CD4-positive, alpha-beta memory T cell (primary cell): ENCODE measurements at regions of chr12 and their contacts with region 1.

Region 1: GRCh38 chr12:103930034-103930786 is at the start of gene HSP90B1:
- DNase-seq: peak; percentile 99 to 100 (median 100)
- H3K4me3 ChIP-seq: peak within 1 kb of the TSS; percentile 87
- H3K4me3 Mint-ChIP-seq: peak within 1 kb of the TSS; percentile 87 to 96 (median 91)
- H3K27ac ChIP-seq: peak within 1 kb of the TSS; percentile 99
- H3K27ac Mint-ChIP-seq: peak within 1 kb of the TSS; percentile 99 to 100 (median 100)
- H3K4me1 ChIP-seq: peaks cover 61% of the 10 kb centered on the region
- H3K4me1 Mint-ChIP-seq: peaks cover 42 to 83% (median 54%) of the 10 kb centered on the region in 4 donors
- H3K27me3 ChIP-seq: no peaks in the 10 kb centered on the region
- H3K27me3 Mint-ChIP-seq: peaks cover 0 to 3% of the 10 kb centered on the region in 2 donors
- total RNA-seq, gene HSP90B1: 515 to 534 TPM

Region 2: DNA sequence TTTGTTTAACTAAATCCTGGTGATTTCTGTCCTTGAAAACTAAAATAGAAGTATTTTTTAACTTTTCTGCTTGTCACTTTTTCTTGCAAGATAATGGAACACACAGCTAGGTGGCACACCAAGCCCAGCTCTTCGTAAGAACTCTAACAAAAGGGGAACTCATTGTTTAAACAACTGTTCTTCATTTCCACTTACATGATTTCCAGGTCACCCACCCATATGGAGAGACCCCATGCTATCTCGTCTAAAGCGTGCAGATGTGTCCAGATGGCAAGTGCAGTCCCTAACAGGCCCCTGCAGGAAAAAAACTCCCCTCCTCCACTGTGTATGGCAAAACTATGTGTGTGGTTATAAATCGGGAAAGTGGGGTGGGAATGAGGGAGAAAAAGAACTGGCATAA is 45.9 kb before region 1 on chr12:
- CTCF ChIA-PET with region 1: interaction called, 5 read pairs
- POLR2A ChIA-PET with region 1: interaction called, 11 read pairs
- intact Hi-C with region 1: loop called (anchors 1 kb)
- DNase-seq: peak; percentile 33 to 52 (median 41)
- H3K4me3 ChIP-seq: no peak overlapping the region
- H3K4me3 Mint-ChIP-seq: peak overlapping the region in 1 of 8 donors; percentile 4
- H3K27ac ChIP-seq: no peak overlapping the region
- H3K27ac Mint-ChIP-seq: peak overlapping the region in 5 of 7 donors; percentile 12 to 44 (median 26)
- H3K4me1 ChIP-seq: peaks cover 4% of the 10 kb centered on the region
- H3K4me1 Mint-ChIP-seq: peaks cover 6 to 24% (median 12%) of the 10 kb centered on the region in 4 donors
- H3K27me3 ChIP-seq: no peaks in the 10 kb centered on the region
- H3K27me3 Mint-ChIP-seq: no peaks in the 10 kb centered on the region

Region 3: GRCh38 chr12:103947871-103948555 is 17.8 kb after region 1 on chr12:
- CTCF ChIA-PET with region 1: no interaction called
- POLR2A ChIA-PET with region 1: interaction called, 93 read pairs
- intact Hi-C with region 1: no loop called
- DNase-seq: no peak
- H3K4me3 ChIP-seq: no peak overlapping the region
- H3K4me3 Mint-ChIP-seq: no peak overlapping the region
- H3K27ac ChIP-seq: no peak overlapping the region
- H3K27ac Mint-ChIP-seq: peak overlapping the region in 5 of 7 donors; percentile 42 to 78 (median 53)
- H3K4me1 ChIP-seq: no peaks in the 10 kb centered on the region
- H3K4me1 Mint-ChIP-seq: peaks cover 8 to 20% (median 13%) of the 10 kb centered on the region in 4 donors
- H3K27me3 ChIP-seq: no peaks in the 10 kb centered on the region
- H3K27me3 Mint-ChIP-seq: no peaks in the 10 kb centered on the region

Region 4: DNA sequence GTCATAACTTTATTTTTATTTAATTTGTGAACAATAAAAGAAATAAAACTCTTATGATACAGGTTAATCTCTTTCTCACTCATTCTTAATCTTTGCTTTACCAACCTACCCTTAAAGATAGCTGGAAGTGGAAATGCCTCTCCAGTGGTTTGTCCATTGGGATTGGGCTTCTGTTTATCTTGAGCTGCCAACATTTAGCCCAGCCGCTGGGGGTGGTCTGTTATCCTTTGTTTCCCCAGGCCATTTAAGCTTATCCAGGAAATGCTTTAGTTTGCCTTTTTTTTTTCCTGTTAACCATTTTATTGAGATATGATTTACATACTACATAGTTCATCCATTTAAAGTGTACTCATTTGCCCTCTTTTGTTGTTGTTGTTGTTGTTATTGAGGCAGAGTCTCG is 43.7 kb after region 1 on chr12:
- CTCF ChIA-PET with region 1: no interaction called
- POLR2A ChIA-PET with region 1: interaction called, 10 read pairs
- intact Hi-C with region 1: no loop called
- DNase-seq: no peak
- H3K4me3 ChIP-seq: no peak overlapping the region
- H3K4me3 Mint-ChIP-seq: peak overlapping the region in 1 of 8 donors; percentile 8
- H3K27ac ChIP-seq: no peak overlapping the region
- H3K27ac Mint-ChIP-seq: peak overlapping the region in 1 of 7 donors; percentile 60
- H3K4me1 ChIP-seq: peaks cover 26% of the 10 kb centered on the region
- H3K4me1 Mint-ChIP-seq: peaks cover 28 to 79% (median 43%) of the 10 kb centered on the region in 4 donors
- H3K27me3 ChIP-seq: no peaks in the 10 kb centered on the region
- H3K27me3 Mint-ChIP-seq: no peaks in the 10 kb centered on the region

Region 5: DNA sequence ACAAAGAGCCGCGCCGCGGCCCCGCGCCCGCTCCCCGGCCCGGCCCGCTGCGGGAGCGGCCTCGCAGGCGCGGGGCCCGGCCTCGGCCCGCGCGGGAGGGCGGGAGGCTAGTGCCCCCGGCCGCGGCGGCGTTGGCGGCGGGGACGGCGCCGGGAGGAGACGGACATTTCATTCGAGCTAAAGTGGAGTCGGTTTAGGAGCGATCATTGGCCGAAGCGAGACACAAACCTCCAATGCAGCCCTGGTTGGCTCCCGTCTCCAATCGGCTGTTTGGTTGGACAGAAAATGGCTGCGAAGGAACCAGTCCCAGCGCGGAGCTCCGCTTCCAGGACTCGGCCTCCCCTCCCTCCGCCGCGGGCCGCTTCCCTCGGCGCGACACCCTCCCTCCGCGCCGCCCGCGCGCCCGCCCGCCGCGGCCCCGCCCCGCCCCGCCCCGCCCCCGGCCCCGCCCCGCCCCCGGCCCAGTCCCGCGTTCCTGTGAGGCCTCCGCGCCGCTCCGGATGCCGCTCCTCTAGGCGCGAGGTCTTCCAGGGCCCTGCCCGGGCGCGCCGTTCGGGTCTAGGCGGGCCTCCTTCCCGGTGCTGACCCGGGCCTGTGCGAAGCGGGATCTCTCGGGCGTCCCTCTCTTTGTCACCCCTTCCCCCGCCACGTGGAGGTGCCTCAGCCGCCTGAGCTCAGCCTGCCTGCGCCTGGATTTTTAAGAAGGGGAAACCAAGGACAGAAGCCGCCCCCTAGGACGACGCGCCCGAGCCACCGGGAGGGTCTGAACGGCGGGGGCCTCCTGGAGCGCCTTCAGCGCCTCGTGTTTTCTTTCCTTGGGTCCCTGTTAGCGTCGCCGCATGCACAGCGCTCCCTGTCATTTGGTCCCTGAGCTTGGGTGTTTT is 207.9 kb after region 1 on chr12 and contains the start of gene NFYB:
- CTCF ChIA-PET with region 1: no interaction called
- POLR2A ChIA-PET with region 1: interaction called, 33 read pairs
- intact Hi-C with region 1: loop called (anchors 2 kb)
- DNase-seq: peak; percentile 95 to 97 (median 95)
- H3K4me3 ChIP-seq: peak within 1 kb of the TSS; percentile 37 to 66
- H3K4me3 Mint-ChIP-seq: peak within 1 kb of the TSS; percentile 90 to 95 (median 94)
- H3K27ac ChIP-seq: peak within 1 kb of the TSS; percentile 75
- H3K27ac Mint-ChIP-seq: peak within 1 kb of the TSS; percentile 85 to 97 (median 92)
- H3K4me1 ChIP-seq: peaks cover 35% of the 10 kb centered on the region
- H3K4me1 Mint-ChIP-seq: peaks cover 12 to 21% (median 16%) of the 10 kb centered on the region in 4 donors
- H3K27me3 ChIP-seq: no peaks in the 10 kb centered on the region
- H3K27me3 Mint-ChIP-seq: peaks cover 0 to 2% of the 10 kb centered on the region in 2 donors
- total RNA-seq, gene NFYB: 29.9 to 32.5 TPM